Heart left ventricle (tissue), 16 donors: ENCODE measurements at regions of chr9 and their contacts with region 1.

Region 1: DNA sequence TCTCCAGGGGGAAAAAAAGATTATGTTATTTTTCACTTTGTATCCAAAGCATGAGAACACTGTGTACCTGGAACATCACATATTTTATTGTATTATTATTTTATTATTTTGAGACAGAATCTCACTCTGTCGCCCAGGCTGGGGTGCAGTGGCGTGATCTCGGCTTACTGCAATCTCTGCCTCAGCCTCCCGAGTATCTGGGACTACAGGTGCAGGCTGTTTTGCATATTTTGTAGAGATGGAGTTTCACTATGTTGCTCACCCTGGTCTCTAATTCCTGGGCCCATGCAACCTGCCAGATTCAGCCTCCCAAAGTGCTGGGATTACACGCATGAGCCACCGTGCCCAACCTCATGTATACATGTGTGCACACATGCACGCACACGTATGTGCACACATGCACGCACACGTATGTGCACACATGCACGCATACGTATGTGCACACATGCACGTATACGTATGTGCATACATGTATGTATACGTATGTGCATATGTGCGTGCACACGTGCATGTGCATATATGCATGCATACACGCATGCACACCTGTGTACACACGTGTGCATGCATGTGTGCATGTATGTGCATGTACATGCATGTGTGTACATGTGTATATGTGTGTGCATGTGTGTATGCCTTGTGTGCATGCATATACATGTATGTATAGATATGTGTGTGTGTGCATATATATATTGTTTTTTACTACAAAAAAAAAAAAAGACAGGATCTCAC is 9.5 kb upstream of the UGCG start:
- DNase-seq: no peak
- ATAC-seq: no peak
- H3K4me3 ChIP-seq: no peak overlapping the region
- H3K27ac ChIP-seq: no peak overlapping the region
- H3K4me1 ChIP-seq: peaks cover 0 to 5% (median 0%) of the 10 kb centered on the region in 12 donors
- H3K27me3 ChIP-seq: no peaks in the 10 kb centered on the region
- CTCF ChIP-seq: no peak
- POLR2A ChIP-seq: no peak

Region 2: DNA sequence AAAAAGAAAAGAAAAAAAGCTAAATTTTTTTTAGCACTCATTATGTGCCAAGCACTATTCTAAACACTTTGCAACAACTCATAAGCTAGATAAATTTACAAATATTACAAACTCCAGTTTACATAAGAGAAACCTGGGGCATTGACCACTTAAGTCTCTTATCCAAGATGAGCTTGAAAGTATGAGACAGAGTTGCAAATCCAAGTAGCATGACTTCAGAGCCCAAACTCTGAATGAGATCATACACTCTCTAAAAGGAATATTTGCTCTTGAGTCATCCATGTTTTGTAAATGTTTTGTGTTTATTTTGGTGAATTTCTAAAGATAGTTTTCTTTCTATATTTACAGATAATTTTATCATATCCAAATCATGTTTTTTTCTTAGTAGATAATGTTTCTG is 88.4 kb before region 1 on chr9:
- intact Hi-C with region 1: loop called in 1 of 10 experiments (anchors 10 kb)
- DNase-seq: no peak
- ATAC-seq: no peak
- H3K4me3 ChIP-seq: no peak overlapping the region
- H3K27ac ChIP-seq: no peak overlapping the region
- H3K4me1 ChIP-seq: no peaks in the 10 kb centered on the region
- H3K27me3 ChIP-seq: no peaks in the 10 kb centered on the region
- CTCF ChIP-seq: no peak
- POLR2A ChIP-seq: no peak

Region 3: DNA sequence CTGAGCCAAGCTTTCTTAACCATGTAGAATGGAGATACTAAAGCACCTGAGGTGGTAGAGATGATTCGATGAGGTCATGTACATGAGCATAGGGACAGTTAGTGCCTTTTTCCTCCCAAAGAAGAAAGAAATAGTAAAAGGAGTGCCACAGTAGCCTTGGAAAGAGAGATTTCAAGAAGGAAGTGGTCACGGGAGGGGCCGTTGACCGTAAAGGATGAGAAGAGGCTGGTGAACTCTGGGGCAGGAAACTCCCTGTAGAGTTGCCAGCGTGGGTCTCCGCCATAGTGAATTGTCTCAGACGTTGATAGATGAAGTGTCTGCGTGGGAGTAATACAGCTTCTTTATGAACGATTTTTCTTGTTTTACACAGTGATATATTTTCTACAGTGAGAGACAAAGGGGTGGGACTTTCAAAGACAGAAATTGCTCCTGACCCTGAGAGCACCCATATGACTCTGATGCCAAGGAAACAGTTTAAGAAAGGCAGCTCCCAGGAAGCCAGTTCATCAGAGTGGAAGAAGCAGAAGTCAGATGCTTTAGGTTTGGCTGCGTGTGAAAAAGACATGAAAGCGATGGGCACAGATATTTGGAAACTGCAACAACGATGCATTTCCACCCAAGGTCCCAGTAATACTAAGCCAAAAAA is 50.8 kb after region 1 on chr9:
- intact Hi-C with region 1: no loop called
- DNase-seq: peak in 4 of 5 donors; percentile 15 to 55 (median 47)
- ATAC-seq: peak in 3 of 4 donors; percentile 63 to 80 (median 70)
- H3K4me3 ChIP-seq: peak overlapping the region in 1 of 12 donors; percentile 12
- H3K27ac ChIP-seq: peak overlapping the region in 2 of 12 donors; percentile 28 to 88
- H3K4me1 ChIP-seq: peaks cover 0 to 29% (median 7%) of the 10 kb centered on the region in 12 donors
- H3K27me3 ChIP-seq: no peaks in the 10 kb centered on the region
- CTCF ChIP-seq: no peak
- POLR2A ChIP-seq: no peak